ENCODE measurements at regions of chr2 and their contacts with region 1.

Region 1: GRCh38 chr2:54838585-54839035 is 115.1 kb downstream of the EML6 start:
- DNase-seq: peak; percentile 62
- ATAC-seq: peak; percentile 87
- H3K4me3 Mint-ChIP-seq: no peak overlapping the region
- H3K27ac Mint-ChIP-seq: no peak overlapping the region
- H3K4me1 Mint-ChIP-seq: no peaks in the 10 kb centered on the region
- H3K27me3 Mint-ChIP-seq: no peaks in the 10 kb centered on the region
- CTCF ChIP-seq: peak; percentile 76

Region 2: GRCh38 chr2:54763636-54764291 is 74.8 kb before region 1 on chr2:
- CTCF ChIA-PET with region 1: interaction called, 11 read pairs
- POLR2A ChIA-PET with region 1: no interaction called
- DNase-seq: peak; percentile 60
- ATAC-seq: peak; percentile 90
- H3K4me3 Mint-ChIP-seq: no peak overlapping the region
- H3K27ac Mint-ChIP-seq: no peak overlapping the region
- H3K4me1 Mint-ChIP-seq: 0 out of 2 replicates have a peak, but pooled peaks cover 1% of the 10 kb centered on the region
- H3K27me3 Mint-ChIP-seq: no peaks in the 10 kb centered on the region
- CTCF ChIP-seq: peak; percentile 27; the same call in 1 of the 2 replicates

Region 3: GRCh38 chr2:54818226-54818625 is 20.4 kb before region 1 on chr2:
- CTCF ChIA-PET with region 1: interaction called, 14 read pairs
- POLR2A ChIA-PET with region 1: no interaction called
- DNase-seq: no peak
- ATAC-seq: no peak; the same call in 1 of the 2 replicates
- H3K4me3 Mint-ChIP-seq: no peak overlapping the region
- H3K27ac Mint-ChIP-seq: no peak overlapping the region
- H3K4me1 Mint-ChIP-seq: peaks cover 22% of the 10 kb centered on the region
- H3K27me3 Mint-ChIP-seq: no peaks in the 10 kb centered on the region; the same call in 1 of the 2 replicates
- CTCF ChIP-seq: no peak

Measured in WTC11 (cell line).